Activated naive CD4-positive, alpha-beta T cell treated with anti-CD3 and anti-CD28 coated beads for 36 hours (primary cell): ENCODE measurements at regions of chr1 and their contacts with region 1.

Region 1: DNA sequence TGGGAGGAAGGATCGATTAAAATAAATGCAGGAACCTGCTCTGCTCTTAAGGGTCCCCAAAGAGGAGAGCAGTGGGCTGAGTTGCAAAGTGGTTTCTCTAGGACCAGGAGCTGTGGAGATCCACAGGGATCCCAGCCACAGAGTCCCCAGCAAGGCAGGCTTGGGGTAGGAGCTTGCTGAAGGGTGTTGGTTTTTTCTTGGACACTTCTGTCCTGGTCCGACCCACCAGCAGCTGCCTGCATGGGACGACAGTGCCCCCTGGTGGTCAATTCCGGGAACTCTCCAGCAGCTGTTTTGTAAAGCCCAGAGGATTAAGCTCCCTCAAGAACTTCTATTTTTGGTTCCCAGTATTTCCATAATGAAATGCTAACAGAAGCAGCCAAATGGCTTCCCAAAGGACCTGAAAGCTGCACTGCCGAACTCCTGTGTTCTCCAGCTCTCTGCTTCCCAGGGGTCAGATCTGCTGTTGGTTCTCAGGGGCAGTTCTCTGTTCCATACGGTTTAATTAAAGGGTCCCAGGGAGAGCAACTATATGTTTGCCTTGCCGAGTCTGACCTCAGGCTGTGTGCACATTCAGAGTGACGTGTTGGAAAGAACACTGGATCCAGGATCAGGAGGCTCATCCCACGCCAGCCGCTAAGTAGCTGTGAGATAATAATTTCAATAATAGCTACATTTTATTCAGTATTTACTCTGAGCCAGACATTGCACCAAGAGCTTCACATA is 23.2 kb downstream of the NENF start:
- DNase-seq: peak; percentile 89
- H3K4me3 Mint-ChIP-seq: no peak overlapping the region
- H3K27ac Mint-ChIP-seq: no peak overlapping the region
- H3K4me1 Mint-ChIP-seq: peaks cover 3% of the 10 kb centered on the region
- H3K27me3 Mint-ChIP-seq: no peaks in the 10 kb centered on the region

Region 2: GRCh38 chr1:211698161-211699026 is 757.6 kb before region 1 on chr1:
- CTCF ChIA-PET with region 1: interaction called, 18 read pairs
- intact Hi-C with region 1: loop called (anchors 1 kb)
- DNase-seq: peak; percentile 92
- H3K4me3 Mint-ChIP-seq: peak overlapping the region; percentile 49
- H3K27ac Mint-ChIP-seq: no peak overlapping the region
- H3K4me1 Mint-ChIP-seq: peaks cover 14% of the 10 kb centered on the region
- H3K27me3 Mint-ChIP-seq: no peaks in the 10 kb centered on the region

Region 3: DNA sequence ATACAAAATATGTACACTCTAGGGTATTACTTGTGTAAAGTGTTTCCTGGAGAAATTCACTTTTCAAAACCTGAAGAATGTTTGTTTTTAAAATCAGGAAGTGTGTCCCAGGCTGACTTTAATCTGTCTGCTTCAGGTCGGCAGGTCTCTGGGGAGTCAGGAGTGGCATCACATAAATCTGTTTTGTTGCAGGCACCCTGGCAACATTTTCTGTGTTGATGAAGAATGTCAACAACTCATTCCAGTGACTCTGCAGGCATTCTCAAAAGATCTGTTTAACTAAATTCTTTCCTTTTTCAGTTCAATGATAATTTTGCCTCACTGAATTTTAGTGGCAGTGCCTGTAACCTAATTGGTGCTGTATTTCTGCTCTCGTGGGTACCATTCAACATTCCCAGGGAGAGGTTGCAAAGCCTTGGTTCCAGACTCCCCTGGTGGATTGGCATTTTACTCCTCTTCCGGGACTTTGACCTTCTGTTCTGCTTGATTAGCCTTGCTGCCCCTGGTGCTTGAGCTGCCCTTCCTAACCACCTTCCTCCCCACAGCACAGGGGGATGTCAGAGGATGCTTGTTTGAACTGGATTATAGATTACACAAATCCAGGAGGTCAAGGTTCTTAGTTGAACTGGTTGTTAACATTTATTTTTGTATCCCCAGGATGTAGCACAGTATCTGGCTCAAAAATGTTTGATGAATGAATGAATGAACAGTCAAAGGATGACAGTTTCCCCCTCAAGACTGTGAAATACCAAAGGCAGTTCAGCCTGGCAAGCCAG is 570.0 kb before region 1 on chr1:
- CTCF ChIA-PET with region 1: no interaction called
- intact Hi-C with region 1: no loop called
- DNase-seq: no peak
- H3K4me3 Mint-ChIP-seq: no peak overlapping the region
- H3K27ac Mint-ChIP-seq: no peak overlapping the region
- H3K4me1 Mint-ChIP-seq: peaks cover 12% of the 10 kb centered on the region
- H3K27me3 Mint-ChIP-seq: no peaks in the 10 kb centered on the region

Region 4: GRCh38 chr1:212162635-212163034 is 293.3 kb before region 1 on chr1:
- CTCF ChIA-PET with region 1: interaction called, 8 read pairs
- intact Hi-C with region 1: loop called (anchors 2 kb)
- DNase-seq: peak; percentile 60
- H3K4me3 Mint-ChIP-seq: no peak overlapping the region
- H3K27ac Mint-ChIP-seq: no peak overlapping the region
- H3K4me1 Mint-ChIP-seq: peaks cover 32% of the 10 kb centered on the region
- H3K27me3 Mint-ChIP-seq: no peaks in the 10 kb centered on the region

Region 5: GRCh38 chr1:212381397-212382035 is 74.5 kb before region 1 on chr1:
- CTCF ChIA-PET with region 1: interaction called, 13 read pairs
- intact Hi-C with region 1: no loop called
- DNase-seq: no peak
- H3K4me3 Mint-ChIP-seq: no peak overlapping the region
- H3K27ac Mint-ChIP-seq: no peak overlapping the region
- H3K4me1 Mint-ChIP-seq: no peaks in the 10 kb centered on the region
- H3K27me3 Mint-ChIP-seq: no peaks in the 10 kb centered on the region

Region 6: GRCh38 chr1:212440419-212440818 is 15.5 kb before region 1 on chr1:
- CTCF ChIA-PET with region 1: interaction called, 45 read pairs
- intact Hi-C with region 1: no loop called
- DNase-seq: no peak
- H3K4me3 Mint-ChIP-seq: no peak overlapping the region
- H3K27ac Mint-ChIP-seq: no peak overlapping the region
- H3K4me1 Mint-ChIP-seq: peaks cover 12% of the 10 kb centered on the region
- H3K27me3 Mint-ChIP-seq: no peaks in the 10 kb centered on the region

Region 7: DNA sequence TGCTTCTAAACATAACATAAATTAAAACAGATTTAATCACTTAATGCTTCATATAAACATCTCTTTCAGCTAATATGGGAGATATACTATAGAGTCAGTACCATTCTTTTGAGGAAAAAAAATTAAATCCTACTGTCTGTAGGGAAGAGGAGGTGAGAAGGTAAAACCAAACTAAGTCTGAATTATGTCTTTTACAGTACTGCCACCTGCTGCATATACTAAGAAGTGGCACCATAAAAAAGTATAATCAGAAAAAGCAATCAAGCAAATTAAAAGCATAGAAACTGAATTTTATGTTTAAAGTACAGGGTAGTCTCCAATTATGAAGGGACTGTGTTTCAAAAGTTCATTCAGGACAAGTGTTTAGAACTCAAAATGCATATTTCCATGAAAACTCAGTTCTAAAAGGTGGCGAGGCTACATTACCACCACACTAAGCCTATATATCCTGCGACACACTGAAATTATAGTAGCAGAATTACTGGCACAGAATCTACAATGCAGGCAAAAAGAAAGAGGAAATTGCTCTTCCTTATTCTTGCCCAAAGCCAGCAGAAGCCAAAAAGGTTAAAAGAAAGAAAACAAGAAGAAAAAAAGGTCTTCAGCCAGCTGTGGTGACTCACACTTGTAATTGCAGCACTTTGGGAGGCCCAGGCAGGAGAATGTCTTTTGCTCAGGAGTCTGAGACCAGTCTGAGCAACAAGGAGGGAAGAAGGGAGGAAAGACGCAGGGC is 326.6 kb after region 1 on chr1:
- CTCF ChIA-PET with region 1: interaction called, 11 read pairs
- intact Hi-C with region 1: loop called (anchors 1 kb)
- DNase-seq: peak; percentile 13
- H3K4me3 Mint-ChIP-seq: no peak overlapping the region
- H3K27ac Mint-ChIP-seq: no peak overlapping the region
- H3K4me1 Mint-ChIP-seq: peaks cover 13% of the 10 kb centered on the region
- H3K27me3 Mint-ChIP-seq: no peaks in the 10 kb centered on the region

Region 8: DNA sequence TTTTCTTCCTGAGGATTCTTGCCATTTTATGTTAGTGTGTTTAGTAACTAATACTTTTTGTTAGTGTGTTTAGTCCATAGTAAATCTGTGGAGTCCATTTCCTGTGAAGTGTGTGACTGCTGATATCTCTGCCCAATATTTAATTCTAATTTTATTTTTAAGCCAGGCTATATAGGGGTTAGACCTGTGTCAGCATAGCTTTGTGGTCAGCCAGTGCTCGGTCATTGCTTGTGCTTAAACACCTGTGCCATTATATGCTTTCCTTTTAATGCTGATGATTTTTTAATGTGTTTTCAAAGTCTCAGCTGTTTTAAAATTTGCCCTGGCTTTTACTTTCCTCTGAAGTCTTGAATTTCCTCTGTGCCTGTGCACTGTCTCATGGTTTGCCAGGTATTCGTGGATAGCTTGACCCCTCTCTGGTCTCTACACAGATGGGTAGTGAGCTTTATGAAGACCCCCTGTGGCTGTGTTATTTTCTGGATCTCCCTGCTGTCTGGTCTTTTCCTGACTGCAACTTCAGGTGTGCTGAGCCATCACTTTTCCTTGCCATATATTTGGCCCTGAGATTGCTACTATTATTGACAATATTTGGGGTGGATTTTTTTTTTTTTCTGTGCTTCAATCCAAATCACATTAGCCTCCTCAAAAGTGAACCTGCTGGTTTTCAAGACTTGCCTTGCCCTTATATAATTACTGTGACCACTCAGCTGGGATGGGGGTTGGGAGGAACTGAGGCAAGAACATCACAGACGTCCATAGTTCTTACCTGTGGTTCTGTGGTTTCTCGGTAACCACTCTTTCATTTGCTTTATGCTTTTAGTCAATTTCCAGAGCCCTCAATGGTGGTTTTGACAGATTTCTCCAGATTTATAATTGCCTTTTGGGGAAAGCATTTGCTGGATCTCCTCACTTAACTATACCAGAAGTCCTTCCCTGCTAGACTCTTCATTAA is 654.7 kb after region 1 on chr1:
- CTCF ChIA-PET with region 1: no interaction called
- intact Hi-C with region 1: no loop called
- DNase-seq: no peak
- H3K4me3 Mint-ChIP-seq: no peak overlapping the region
- H3K27ac Mint-ChIP-seq: no peak overlapping the region
- H3K4me1 Mint-ChIP-seq: peaks cover 7% of the 10 kb centered on the region
- H3K27me3 Mint-ChIP-seq: no peaks in the 10 kb centered on the region